GM10248 (cell line): ENCODE measurements at regions of chr2 and their contacts with region 1.

Region 1: DNA sequence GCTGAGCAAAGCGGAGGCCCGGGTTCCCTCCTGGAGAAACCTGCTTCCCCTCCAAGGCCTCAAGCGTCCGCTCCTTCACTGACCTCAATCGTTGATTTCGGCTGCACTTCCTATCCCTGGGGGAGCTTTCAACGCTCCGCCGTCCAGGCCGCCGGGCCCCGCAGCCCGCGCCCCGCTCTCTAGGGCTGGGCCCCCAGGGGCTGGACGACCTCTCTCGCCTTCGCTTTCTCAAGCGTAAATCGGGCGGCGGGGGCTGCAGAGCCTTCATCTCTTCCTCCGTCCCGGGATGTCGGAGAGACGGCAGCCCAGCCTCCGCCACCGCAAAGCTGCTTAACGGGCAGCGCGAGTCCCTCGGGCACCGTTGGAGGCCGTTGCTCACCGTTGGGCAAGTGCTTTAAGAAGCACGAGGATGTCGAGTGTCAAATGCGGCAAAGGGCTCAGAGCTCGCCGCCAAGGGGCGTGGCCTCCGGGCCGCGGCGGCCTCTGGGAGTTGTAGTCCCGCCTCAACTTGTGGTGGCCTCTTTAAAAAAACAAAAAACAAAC is 8.5 kb downstream of the HES6 start:
- DNase-seq: peak; percentile 85
- CTCF ChIP-seq: no peak

Region 2: GRCh38 chr2:238220892-238221521 is 10.3 kb before region 1 on chr2:
- CTCF ChIA-PET with region 1: interaction called, 10 read pairs
- POLR2A ChIA-PET with region 1: no interaction called
- DNase-seq: peak; percentile 23
- CTCF ChIP-seq: no peak

Region 3: GRCh38 chr2:238242731-238243495 is 11.6 kb after region 1 on chr2:
- CTCF ChIA-PET with region 1: no interaction called
- POLR2A ChIA-PET with region 1: no interaction called
- DNase-seq: no peak
- CTCF ChIP-seq: no peak